ENCODE measurements at regions of chr17 and their contacts with region 1.

Region 1: DNA sequence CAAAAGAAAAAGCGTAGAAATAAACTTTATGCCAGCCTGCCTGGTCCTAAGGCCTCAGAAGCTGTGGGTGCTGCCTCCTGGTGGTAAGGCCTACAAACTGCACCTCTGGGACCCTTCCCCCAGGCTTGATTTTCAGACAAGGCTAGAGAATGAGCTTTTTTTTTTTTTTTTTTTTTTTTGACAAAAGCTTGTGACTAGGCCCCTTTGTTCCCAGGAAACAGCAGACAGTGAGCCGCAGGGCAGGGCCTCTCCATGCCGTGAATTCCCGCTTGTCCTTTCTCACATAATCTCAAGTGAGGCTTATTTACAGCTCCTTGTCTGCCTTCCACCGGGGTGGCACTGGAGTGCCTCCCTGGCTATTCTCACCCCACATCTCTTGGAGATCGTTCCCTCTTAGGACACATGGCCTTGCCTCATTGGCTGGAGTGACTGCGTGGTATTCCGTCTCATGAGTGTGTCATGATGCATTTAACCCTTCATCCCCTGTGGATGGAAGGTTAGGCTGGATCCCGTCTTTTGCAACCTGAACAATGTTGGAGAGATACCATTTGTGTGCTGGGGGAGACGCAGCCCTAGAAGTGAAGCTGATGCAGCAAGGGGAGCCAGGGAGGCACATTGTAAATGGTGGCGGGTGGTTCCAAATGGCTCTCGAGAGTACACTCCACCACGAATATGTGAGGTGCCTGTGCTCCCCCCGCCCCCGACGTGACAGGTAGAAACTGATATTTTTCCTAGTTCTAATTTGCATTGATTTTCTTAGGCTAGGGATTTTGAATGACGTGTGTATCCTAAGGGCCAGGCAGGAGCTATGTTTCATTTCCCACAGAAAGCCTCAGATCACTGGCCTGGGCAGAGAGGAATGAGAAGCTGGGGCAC is 49.6 kb downstream of the USP22 start:
- DNase-seq: peak; percentile 72 to 82
- ATAC-seq: peak; percentile 81
- H3K4me3 ChIP-seq: no peak overlapping the region
- H3K27ac ChIP-seq: no peak overlapping the region
- H3K4me1 ChIP-seq: no peaks in the 10 kb centered on the region
- H3K27me3 ChIP-seq: no peaks in the 10 kb centered on the region

Region 2: DNA sequence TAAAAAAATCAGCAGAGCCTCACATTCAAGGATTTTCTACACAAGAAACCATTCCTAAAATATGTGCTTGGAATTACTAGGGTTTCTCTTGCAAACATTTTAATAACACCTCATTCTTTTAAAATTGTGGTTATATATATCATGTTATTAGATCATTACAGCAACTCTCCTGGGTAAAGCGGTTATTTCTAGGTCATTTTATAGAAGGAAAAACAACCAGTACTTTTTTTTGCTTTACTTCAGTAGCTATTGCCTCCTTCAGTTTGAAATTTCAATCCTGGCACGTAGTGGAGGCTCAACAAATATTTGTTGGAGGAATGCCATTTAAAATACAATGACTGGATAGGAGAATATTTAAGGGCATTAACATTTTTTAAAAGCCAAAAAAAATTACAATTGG is 193.1 kb before region 1 on chr17:
- intact Hi-C with region 1: loop called in 1 of 2 experiments (anchors 5 kb)
- DNase-seq: no peak
- ATAC-seq: no peak
- H3K4me3 ChIP-seq: no peak overlapping the region
- H3K27ac ChIP-seq: no peak overlapping the region
- H3K4me1 ChIP-seq: no peaks in the 10 kb centered on the region
- H3K27me3 ChIP-seq: no peaks in the 10 kb centered on the region

Region 3: GRCh38 chr17:20823905-20824304 is 169.3 kb before region 1 on chr17:
- intact Hi-C with region 1: loop called in 1 of 2 experiments (anchors 10 kb)
- DNase-seq: no peak
- ATAC-seq: no peak
- H3K4me3 ChIP-seq: no peak overlapping the region
- H3K27ac ChIP-seq: no peak overlapping the region
- H3K4me1 ChIP-seq: no peaks in the 10 kb centered on the region
- H3K27me3 ChIP-seq: no peaks in the 10 kb centered on the region

Region 4: GRCh38 chr17:20908373-20909273 is 84.6 kb before region 1 on chr17:
- intact Hi-C with region 1: loop called (anchors 5 to 10 kb)
- DNase-seq: peak; percentile 94 to 95
- ATAC-seq: peak; percentile 99
- H3K4me3 ChIP-seq: peak overlapping the region; percentile 6 to 7
- H3K27ac ChIP-seq: peak overlapping the region in 1 of 2 donors; percentile 68
- H3K4me1 ChIP-seq: no peaks in the 10 kb centered on the region
- H3K27me3 ChIP-seq: no peaks in the 10 kb centered on the region

Region 5: GRCh38 chr17:20916383-20916782 is 76.8 kb before region 1 on chr17:
- intact Hi-C with region 1: loop called in 1 of 2 experiments (anchors 10 kb)
- DNase-seq: no peak
- ATAC-seq: no peak
- H3K4me3 ChIP-seq: no peak overlapping the region
- H3K27ac ChIP-seq: no peak overlapping the region
- H3K4me1 ChIP-seq: no peaks in the 10 kb centered on the region
- H3K27me3 ChIP-seq: no peaks in the 10 kb centered on the region

Region 6: DNA sequence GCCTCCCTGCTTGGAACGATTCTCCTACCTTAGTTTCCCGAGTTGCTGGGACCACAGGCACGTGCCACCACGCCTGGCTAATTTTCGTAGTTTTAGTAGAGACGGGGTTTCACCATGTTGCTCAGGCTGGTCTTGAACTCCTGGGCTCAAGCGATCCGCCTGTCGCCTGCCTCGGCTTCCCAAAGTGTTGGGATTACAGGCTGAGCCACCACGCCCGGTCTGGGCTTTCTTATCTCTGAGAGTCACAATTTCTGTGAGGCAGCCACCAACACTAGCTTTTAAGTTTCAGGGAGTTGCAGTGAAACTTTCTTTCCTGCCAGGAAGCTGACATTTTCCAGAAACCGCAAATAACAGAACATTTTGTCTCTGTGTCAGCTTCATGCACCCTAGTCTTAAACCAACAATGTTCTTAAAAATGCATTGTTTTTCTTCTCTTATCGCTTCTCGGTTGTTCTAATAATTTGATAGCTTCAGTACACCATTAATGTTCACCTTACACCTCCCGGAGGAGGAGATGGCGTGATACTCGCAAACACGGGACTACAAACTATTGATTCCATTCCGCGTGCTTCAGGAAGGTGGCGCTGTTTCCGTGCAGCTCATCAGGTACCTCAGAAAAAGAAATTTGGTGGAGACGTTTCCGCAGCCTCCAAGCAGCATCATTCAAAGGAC is 126.2 kb after region 1 on chr17:
- intact Hi-C with region 1: no loop called
- DNase-seq: peak; percentile 72 to 84
- ATAC-seq: peak; percentile 87
- H3K4me3 ChIP-seq: no peak overlapping the region
- H3K27ac ChIP-seq: no peak overlapping the region
- H3K4me1 ChIP-seq: no peaks in the 10 kb centered on the region
- H3K27me3 ChIP-seq: no peaks in the 10 kb centered on the region